Heart right ventricle (tissue), 16 donors: ENCODE measurements at regions of chr2 and their contacts with region 1.

Region 1: GRCh38 chr2:229572507-229573271 is 141.7 kb downstream of the DNER start:
- DNase-seq: no peak
- ATAC-seq: peak in 5 of 8 donors; percentile 16 to 72 (median 65)
- H3K4me3 ChIP-seq: no peak overlapping the region
- H3K27ac ChIP-seq: peak overlapping the region in 6 of 10 donors; percentile 0 to 50 (median 41)
- H3K4me1 ChIP-seq: peaks cover 0 to 6% (median 0%) of the 10 kb centered on the region in 9 donors
- H3K27me3 ChIP-seq: peaks cover 0 to 12% (median 7%) of the 10 kb centered on the region in 7 donors
- CTCF ChIP-seq: no peak

Region 2: DNA sequence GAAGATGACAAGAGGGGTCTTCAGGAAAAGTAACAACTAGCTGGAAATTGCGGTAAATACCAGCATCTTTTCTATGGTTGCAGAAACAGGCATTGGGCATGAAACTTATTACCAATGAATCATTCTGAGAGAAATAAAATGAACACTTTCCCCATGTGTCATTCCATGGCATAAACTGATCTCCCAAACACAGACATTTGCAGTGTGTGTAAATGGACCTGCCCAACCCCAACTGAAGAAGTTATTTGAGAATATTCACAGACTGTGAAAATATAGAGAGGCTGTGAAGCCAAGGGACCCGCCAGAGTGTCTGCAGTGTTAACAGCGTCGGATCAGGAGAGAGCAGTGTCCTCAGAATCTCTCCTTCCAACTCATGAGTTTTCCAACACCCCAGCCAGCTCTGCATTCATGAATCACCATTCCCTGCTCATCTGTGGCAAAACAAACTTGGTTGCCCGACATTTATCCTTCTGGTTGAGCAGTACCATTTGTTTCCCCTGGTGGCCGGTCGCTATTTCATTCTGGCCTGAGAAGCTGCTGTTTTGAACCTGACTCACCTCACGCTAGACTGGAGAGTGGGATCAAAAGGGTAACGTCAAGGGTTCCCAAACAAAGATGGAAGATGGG is 540.0 kb before region 1 on chr2:
- intact Hi-C with region 1: no loop called
- DNase-seq: no peak
- ATAC-seq: no peak
- H3K4me3 ChIP-seq: no peak overlapping the region
- H3K27ac ChIP-seq: no peak overlapping the region
- H3K4me1 ChIP-seq: no peaks in the 10 kb centered on the region
- H3K27me3 ChIP-seq: no peaks in the 10 kb centered on the region
- CTCF ChIP-seq: no peak

Region 3: GRCh38 chr2:229445019-229445418 is 127.7 kb before region 1 on chr2:
- intact Hi-C with region 1: loop called in 1 of 10 experiments (anchors 5 kb)
- DNase-seq: peak; percentile 18 to 40
- ATAC-seq: peak; percentile 73 to 92 (median 83)
- H3K4me3 ChIP-seq: peak overlapping the region in 2 of 10 donors; percentile 14 to 20
- H3K27ac ChIP-seq: peak overlapping the region; percentile 41 to 85 (median 75)
- H3K4me1 ChIP-seq: peaks cover 0 to 41% (median 18%) of the 10 kb centered on the region in 9 donors
- H3K27me3 ChIP-seq: no peaks in the 10 kb centered on the region
- CTCF ChIP-seq: no peak

Region 4: GRCh38 chr2:229553091-229553490 is 19.6 kb before region 1 on chr2:
- intact Hi-C with region 1: loop called in 1 of 10 experiments (anchors 2 kb)
- DNase-seq: no peak
- ATAC-seq: no peak
- H3K4me3 ChIP-seq: no peak overlapping the region
- H3K27ac ChIP-seq: no peak overlapping the region
- H3K4me1 ChIP-seq: no peaks in the 10 kb centered on the region
- H3K27me3 ChIP-seq: peaks cover 0 to 4% (median 0%) of the 10 kb centered on the region in 7 donors
- CTCF ChIP-seq: no peak